ENCODE measurements at regions of chr7 and their contacts with region 1.

Region 1: DNA sequence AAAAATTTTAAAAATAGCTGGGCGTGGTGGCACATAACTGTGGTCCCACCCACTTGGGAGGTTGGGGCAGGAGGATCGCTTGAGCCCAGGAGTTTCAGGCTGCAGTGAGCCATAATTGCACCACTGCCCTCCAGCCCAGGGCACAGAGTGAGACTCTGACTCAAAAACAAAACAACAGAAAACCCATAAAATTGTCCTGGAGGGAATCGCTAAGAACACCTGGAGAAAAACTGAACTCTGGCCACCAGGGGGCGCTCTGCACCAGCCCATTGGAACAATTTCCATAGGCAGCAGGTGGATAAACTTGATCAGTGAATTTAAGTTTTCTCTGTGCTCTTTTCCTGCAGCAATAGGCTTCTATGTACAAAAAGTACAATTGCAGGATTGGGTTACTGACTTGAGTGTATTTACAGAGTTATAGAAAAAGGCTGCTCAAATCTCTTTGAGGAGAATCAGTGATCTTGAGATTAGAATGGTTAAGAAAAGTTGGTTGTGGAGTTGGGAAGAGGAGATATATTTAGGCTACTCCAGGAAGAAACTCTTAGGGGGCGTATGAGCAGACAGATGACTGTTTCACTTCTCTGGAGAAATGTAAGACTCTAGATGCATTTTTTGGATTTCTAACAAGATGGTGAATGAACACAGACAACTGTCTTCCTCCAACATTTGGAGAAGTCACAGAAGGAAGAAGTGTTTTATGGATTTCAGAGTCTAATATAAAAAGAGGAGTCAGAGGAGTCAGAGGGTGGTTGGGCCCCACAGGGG is 274.9 kb upstream of the GALNT17 start:
- DNase-seq: peak; percentile 56
- CTCF ChIP-seq: peak; percentile 80

Region 2: DNA sequence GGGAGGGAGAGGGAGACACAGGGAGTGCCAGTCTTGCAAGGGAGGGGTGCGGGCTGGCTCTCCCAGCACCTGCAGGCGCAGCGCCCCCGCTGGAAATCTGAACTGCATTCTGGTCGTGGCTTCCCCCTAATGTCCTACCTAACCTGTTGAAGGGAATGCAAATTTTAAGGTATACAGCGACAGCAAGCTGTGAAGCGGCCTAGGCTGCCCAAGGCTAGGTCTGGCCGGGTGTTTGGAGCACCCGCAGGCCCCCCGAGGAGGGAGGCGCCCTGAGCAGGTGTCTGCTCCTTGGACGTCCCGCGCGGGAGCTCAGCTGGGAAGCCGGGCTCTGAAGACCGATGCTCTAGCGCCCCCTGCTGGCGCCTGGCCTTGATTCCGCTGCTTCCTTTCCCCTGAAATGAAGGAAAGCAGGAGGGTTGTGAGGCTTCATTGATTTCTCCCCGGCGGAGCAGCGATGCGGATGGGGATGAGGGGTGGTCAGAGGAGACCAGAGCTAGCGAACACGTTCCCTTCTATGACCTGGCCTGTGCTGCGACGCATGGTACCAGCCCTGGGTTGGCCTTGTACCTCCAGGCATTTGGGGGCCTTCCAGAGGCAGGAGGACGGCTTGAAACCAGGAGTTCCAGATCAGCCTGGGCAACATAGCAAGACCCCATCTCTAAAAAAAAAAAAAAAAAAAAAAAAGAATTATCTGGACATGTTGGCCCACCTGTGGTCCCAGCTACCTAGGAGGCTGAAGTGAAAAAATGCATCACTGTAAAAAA is 876.2 kb after region 1 on chr7:
- in situ Hi-C with region 1: loop called (anchors 25 kb)
- DNase-seq: peak; percentile 79
- CTCF ChIP-seq: peak; percentile 90